Head of caudate nucleus (tissue), 42 donors: ENCODE measurements at regions of chr2 and their contacts with region 1.

Region 1: GRCh38 chr2:56183643-56184499 is at the start of gene CCDC85A:
- DNase-seq: peak; percentile 68 to 94 (median 89)

Region 2: DNA sequence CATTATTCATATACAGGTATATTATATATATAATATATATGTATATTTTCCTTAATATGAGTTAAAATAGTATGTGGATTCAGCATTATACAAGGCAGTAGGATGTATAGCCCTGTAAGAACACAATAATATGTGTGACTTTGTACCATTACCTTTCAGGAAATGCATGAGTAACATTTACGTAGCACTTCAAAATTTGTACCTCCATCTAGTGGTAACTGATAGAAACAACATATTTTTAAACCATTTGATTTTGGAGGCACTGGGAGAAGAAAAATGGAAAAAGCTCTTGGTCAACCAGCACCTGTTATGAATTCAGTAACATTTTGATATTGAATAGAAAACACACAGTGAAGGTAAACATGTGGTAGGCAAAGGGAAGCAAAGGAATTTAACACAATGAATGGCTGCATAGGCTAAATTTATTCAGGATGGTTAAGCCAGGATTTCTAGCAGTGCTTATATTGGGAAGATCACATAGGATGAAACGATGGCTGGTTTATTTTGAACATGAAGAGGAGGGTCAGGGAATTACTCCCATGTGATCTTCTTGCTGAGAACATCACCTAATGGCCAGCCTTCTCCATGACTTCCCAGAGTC is 565.4 kb after region 1 on chr2:
- intact Hi-C with region 1: loop called (anchors 5 kb)
- DNase-seq: no peak

Region 3: DNA sequence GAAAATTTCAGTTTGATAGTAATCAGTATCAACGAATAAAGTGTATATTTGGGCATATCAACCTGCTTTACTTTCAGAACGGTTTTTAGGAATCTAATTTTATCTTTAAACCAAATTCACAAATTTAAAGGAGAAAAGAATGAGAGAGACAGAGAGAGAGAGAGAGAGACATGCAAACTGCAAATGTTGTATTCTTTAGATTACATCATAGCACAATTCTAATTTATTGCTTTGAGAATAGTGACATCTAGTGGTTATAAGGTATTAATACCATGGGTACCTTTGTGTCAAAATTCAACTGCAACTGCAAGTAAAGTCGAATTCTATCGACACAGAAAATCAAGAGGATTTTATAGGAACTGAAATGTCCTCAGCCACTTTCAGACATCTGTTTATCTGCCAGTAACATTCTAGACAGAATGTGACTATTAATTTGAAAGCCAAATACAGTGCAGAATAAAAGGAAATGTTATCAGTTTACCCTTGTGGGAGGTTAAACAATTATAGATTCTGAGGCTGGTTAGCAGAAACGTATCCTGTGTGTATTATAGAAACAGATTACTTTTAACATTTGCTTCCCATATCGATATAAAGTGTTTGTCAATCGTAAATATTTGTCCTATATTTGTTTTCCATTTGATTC is 1332.9 kb after region 1 on chr2:
- intact Hi-C with region 1: loop called (anchors 5 kb)
- DNase-seq: no peak